ENCODE measurements at regions of chr14 and their contacts with region 1.

Region 1: GRCh38 chr14:89317051-89317691 is 99.9 kb downstream of the FOXN3 start:
- DNase-seq: no peak
- H3K4me3 ChIP-seq: no peak overlapping the region
- H3K27ac ChIP-seq: no peak overlapping the region
- H3K4me1 ChIP-seq: no peaks in the 10 kb centered on the region
- H3K27me3 ChIP-seq: no peaks in the 10 kb centered on the region
- CTCF ChIP-seq: no peak
- POLR2A ChIP-seq: no peak

Region 2: GRCh38 chr14:89107626-89108025 is 209.5 kb before region 1 on chr14:
- intact Hi-C with region 1: loop called (anchors 5 kb)
- DNase-seq: no peak
- H3K4me3 ChIP-seq: no peak overlapping the region
- H3K27ac ChIP-seq: no peak overlapping the region
- H3K4me1 ChIP-seq: no peaks in the 10 kb centered on the region
- H3K27me3 ChIP-seq: no peaks in the 10 kb centered on the region
- CTCF ChIP-seq: no peak
- POLR2A ChIP-seq: no peak

Region 3: GRCh38 chr14:89391123-89391522 is 74.0 kb after region 1 on chr14:
- intact Hi-C with region 1: loop called (anchors 2 kb)
- DNase-seq: no peak
- H3K4me3 ChIP-seq: no peak overlapping the region
- H3K27ac ChIP-seq: no peak overlapping the region
- H3K4me1 ChIP-seq: no peaks in the 10 kb centered on the region
- H3K27me3 ChIP-seq: no peaks in the 10 kb centered on the region
- CTCF ChIP-seq: no peak
- POLR2A ChIP-seq: no peak

Region 4: DNA sequence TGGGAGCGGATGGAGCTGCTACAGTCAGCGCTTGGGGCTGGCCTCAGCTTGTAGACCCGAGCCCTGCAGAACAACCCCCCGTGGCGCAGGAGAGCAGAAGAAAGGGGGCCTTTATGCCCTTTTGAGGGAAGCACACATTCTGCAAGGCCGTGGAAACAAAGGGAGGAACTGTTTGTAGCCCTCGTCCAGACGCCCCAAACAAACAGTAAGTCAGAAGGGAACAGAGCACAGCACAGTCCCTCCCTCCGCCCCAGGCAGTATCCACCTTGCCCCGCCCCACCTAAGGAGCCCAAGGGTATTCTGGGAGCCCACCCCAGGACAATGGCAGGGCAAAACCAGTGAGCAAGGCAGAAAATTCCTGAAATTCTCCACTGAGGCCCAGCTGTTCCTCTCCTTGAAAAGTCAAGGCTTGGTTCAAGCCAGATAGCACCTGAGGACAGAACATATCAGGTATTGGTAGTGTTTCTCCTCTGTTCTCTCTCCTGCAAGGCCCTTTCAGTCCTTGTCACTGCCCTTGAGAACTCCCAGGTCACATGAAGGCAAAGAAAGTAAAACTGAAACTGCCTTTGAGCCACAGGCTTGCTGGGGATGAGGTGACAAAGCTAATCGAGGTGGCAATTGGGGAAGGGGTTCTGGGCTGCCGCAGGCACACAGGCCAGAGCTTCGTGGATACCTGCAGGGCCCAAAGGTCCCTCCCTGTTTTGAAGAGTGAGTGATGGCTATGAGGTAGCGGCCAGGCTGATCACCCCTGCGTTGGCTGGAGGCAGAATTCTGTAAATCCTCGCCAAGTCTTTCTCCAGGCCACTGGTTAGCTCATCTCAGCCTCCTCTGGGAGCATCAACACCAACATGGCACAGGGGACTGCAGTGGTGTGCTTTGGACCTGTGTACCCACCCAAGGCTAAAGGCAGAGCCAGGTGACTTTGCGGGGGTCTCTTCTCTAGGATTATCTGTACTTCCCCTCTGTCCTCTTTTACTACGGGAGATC is 1797.2 kb after region 1 on chr14:
- intact Hi-C with region 1: no loop called
- DNase-seq: peak; percentile 66 to 68
- H3K4me3 ChIP-seq: peak overlapping the region; percentile 55 to 77 (median 59)
- H3K27ac ChIP-seq: peak overlapping the region; percentile 95 to 98
- H3K4me1 ChIP-seq: peaks cover 9 to 10% of the 10 kb centered on the region in 2 donors
- H3K27me3 ChIP-seq: no peaks in the 10 kb centered on the region
- CTCF ChIP-seq: no peak
- POLR2A ChIP-seq: no peak